ENCODE measurements at regions of chr3 and their contacts with region 1.

Region 1: DNA sequence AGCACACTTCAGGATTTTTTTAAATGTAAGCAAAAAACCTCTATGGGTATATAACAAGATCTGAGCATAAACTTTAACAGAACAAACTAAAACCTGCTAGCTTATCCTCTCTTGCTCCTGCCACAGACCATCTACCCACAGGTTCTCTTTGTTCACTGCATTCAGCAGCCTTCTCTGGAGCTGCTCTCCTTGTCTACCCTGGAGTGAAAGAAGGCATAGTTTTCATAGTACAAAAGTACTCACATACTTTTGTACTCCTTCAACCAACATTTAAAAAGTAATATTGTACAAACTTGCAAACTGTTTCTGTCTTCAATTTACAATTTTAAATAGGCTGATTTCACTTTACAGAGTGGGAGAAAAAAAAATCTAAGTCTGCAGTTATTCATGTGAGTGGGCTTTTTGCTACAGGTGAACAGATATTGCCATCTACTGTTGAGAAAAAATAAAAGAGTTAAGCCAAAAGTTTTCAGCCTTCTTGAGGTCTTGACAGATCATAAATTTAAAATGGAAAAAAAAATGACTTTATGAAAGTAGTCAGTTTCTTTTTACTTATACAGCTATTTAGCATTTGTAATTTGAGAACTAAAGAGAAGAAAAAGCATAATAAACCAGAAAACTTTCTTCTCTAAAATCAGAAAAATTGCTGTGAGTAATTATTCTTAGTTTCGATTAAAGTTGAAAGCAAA is 20.4 kb downstream of the TERC start:
- DNase-seq: no peak
- ATAC-seq: peak; percentile 58

Region 2: GRCh38 chr3:169041677-169042171 is 702.8 kb before region 1 on chr3:
- intact Hi-C with region 1: loop called (anchors 10 kb)
- DNase-seq: no peak
- ATAC-seq: peak; percentile 60

Region 3: GRCh38 chr3:169133178-169134161 is 611.0 kb before region 1 on chr3:
- intact Hi-C with region 1: loop called (anchors 10 kb)
- DNase-seq: no peak
- ATAC-seq: no peak

Region 4: DNA sequence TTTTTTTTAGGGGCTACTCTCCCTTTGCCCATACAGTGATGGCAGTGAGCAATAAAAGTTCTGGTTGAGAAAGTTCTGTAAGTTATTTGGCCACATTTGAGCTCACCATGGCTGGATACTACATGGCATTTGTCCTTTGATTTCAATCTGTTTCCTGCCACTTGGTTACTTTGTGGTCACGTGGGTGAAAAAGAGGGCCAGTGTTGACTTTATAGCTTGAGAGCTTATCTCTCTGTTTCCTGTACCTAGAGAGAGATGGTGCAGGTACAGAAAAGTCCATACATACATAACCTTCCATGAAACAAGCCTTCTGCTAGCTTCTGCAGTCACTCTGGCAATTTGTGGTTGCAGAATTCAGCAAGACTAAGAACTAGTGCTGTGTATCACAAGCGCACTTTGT is 57.6 kb before region 1 on chr3:
- intact Hi-C with region 1: loop called (anchors 5 kb)
- DNase-seq: no peak
- ATAC-seq: no peak

Region 5: DNA sequence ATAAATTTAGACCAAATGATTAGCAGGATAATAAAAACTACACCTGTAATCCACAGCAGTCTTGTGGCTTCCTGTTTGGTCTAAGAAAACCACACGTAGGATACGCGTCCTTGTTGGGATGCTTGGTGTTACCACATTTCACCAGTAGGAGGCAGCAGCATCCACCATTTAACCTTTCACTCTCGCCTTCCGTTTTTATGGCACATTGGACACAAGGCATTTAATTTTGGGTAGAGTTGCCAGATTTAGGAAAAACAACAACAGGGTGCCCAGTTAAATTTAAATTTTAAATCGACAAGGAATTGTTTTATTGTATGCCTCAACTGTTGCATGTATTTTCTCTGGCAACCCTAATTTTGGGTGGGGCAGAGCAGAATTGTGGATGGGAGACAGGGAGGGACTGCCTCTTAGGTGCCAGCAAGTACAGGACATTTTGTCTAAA is 119.0 kb after region 1 on chr3:
- intact Hi-C with region 1: no loop called
- DNase-seq: peak; percentile 50
- ATAC-seq: peak; percentile 90